CD4-positive, alpha-beta T cell (primary cell): ENCODE measurements at regions of chr11 and their contacts with region 1.

Region 1: GRCh38 chr11:67317205-67317887 is 14.0 kb downstream of the SSH3 start:
- DNase-seq: peak; percentile 96 to 99 (median 98)
- ATAC-seq: peak; percentile 78
- H3K4me3 ChIP-seq: peak overlapping the region; percentile 82
- H3K4me3 Mint-ChIP-seq: peak overlapping the region; percentile 99
- H3K27ac ChIP-seq: peak overlapping the region; percentile 46 to 70
- H3K27ac Mint-ChIP-seq: peak overlapping the region; percentile 85
- H3K4me1 ChIP-seq: peaks cover 42% of the 10 kb centered on the region
- H3K4me1 Mint-ChIP-seq: peaks cover 54% of the 10 kb centered on the region
- H3K27me3 ChIP-seq: no peaks in the 10 kb centered on the region
- H3K27me3 Mint-ChIP-seq: no peaks in the 10 kb centered on the region
- CTCF ChIP-seq: peak; percentile 88

Region 2: DNA sequence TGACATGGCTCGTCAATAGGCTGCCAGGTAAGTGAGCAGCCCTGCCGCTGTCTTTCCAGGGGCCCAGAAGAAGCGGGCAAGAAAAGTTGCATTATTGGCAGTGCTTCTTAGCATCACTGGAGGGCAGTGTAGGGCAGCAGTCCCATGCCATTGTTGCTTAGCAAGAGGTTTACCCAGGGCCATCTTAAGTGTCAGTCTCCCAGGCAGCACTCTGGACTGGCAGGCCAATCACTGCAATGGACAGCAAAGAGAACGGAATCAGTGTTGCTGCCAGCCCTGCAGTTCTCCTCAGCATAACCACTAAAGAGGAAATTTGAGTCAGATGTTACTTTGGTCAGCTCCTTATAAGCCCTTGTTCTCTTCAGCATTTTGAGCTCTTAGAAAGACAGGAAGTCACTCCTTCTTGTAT is 64.5 kb before region 1 on chr11:
- CTCF ChIA-PET with region 1: interaction called, 22 read pairs
- POLR2A ChIA-PET with region 1: interaction called, 7 read pairs
- intact Hi-C with region 1: no loop called
- DNase-seq: peak in 5 of 14 experiments; percentile 26 to 74 (median 53)
- ATAC-seq: peak; percentile 67
- H3K4me3 ChIP-seq: no peak overlapping the region
- H3K4me3 Mint-ChIP-seq: no peak overlapping the region
- H3K27ac ChIP-seq: no peak overlapping the region
- H3K27ac Mint-ChIP-seq: peak overlapping the region; percentile 57
- H3K4me1 ChIP-seq: peaks cover 27% of the 10 kb centered on the region
- H3K4me1 Mint-ChIP-seq: peaks cover 54% of the 10 kb centered on the region
- H3K27me3 ChIP-seq: no peaks in the 10 kb centered on the region
- H3K27me3 Mint-ChIP-seq: no peaks in the 10 kb centered on the region
- CTCF ChIP-seq: peak; percentile 34

Region 3: GRCh38 chr11:67277231-67277961 is 40.0 kb before region 1 on chr11:
- CTCF ChIA-PET with region 1: interaction called, 64 read pairs
- POLR2A ChIA-PET with region 1: interaction called, 31 read pairs
- intact Hi-C with region 1: loop called in 1 of 2 experiments (anchors 1 kb)
- DNase-seq: peak; percentile 81 to 98 (median 93)
- ATAC-seq: peak; percentile 93
- H3K4me3 ChIP-seq: peak overlapping the region; percentile 43
- H3K4me3 Mint-ChIP-seq: peak overlapping the region; percentile 91
- H3K27ac ChIP-seq: peak overlapping the region; percentile 76 to 97
- H3K27ac Mint-ChIP-seq: peak overlapping the region; percentile 90
- H3K4me1 ChIP-seq: peaks cover 100% of the 10 kb centered on the region
- H3K4me1 Mint-ChIP-seq: peaks cover 64% of the 10 kb centered on the region
- H3K27me3 ChIP-seq: no peaks in the 10 kb centered on the region
- H3K27me3 Mint-ChIP-seq: no peaks in the 10 kb centered on the region
- CTCF ChIP-seq: no peak

Region 4: GRCh38 chr11:67303132-67303834 is 14.1 kb before region 1 on chr11 and contains the start of gene SSH3:
- CTCF ChIA-PET with region 1: interaction called, 21 read pairs
- POLR2A ChIA-PET with region 1: interaction called, 13 read pairs
- intact Hi-C with region 1: no loop called
- DNase-seq: peak in 8 of 14 experiments; percentile 30 to 66 (median 48)
- ATAC-seq: peak; percentile 62
- H3K4me3 ChIP-seq: peak within 1 kb of the TSS; percentile 62
- H3K4me3 Mint-ChIP-seq: peak within 1 kb of the TSS; percentile 65
- H3K27ac ChIP-seq: peak within 1 kb of the TSS in 1 of 2 donors; percentile 41
- H3K27ac Mint-ChIP-seq: no peak within 1 kb of the TSS
- H3K4me1 ChIP-seq: peaks cover 33% of the 10 kb centered on the region
- H3K4me1 Mint-ChIP-seq: peaks cover 5% of the 10 kb centered on the region
- H3K27me3 ChIP-seq: no peaks in the 10 kb centered on the region
- H3K27me3 Mint-ChIP-seq: no peaks in the 10 kb centered on the region
- CTCF ChIP-seq: no peak
- total RNA-seq, gene SSH3: 8.5 to 8.8 TPM

Region 5: GRCh38 chr11:67371212-67371910 is 54.0 kb after region 1 on chr11:
- CTCF ChIA-PET with region 1: no interaction called
- POLR2A ChIA-PET with region 1: no interaction called
- intact Hi-C with region 1: no loop called
- DNase-seq: peak in 4 of 14 experiments; percentile 19 to 73 (median 52)
- ATAC-seq: peak; percentile 12
- H3K4me3 ChIP-seq: peak overlapping the region; percentile 46
- H3K4me3 Mint-ChIP-seq: peak overlapping the region; percentile 94
- H3K27ac ChIP-seq: no peak overlapping the region
- H3K27ac Mint-ChIP-seq: peak overlapping the region; percentile 85
- H3K4me1 ChIP-seq: peaks cover 84% of the 10 kb centered on the region
- H3K4me1 Mint-ChIP-seq: peaks cover 62% of the 10 kb centered on the region
- H3K27me3 ChIP-seq: peaks cover 2 to 13% of the 10 kb centered on the region in 2 experiments
- H3K27me3 Mint-ChIP-seq: peaks cover 33% of the 10 kb centered on the region
- CTCF ChIP-seq: no peak

Region 6: DNA sequence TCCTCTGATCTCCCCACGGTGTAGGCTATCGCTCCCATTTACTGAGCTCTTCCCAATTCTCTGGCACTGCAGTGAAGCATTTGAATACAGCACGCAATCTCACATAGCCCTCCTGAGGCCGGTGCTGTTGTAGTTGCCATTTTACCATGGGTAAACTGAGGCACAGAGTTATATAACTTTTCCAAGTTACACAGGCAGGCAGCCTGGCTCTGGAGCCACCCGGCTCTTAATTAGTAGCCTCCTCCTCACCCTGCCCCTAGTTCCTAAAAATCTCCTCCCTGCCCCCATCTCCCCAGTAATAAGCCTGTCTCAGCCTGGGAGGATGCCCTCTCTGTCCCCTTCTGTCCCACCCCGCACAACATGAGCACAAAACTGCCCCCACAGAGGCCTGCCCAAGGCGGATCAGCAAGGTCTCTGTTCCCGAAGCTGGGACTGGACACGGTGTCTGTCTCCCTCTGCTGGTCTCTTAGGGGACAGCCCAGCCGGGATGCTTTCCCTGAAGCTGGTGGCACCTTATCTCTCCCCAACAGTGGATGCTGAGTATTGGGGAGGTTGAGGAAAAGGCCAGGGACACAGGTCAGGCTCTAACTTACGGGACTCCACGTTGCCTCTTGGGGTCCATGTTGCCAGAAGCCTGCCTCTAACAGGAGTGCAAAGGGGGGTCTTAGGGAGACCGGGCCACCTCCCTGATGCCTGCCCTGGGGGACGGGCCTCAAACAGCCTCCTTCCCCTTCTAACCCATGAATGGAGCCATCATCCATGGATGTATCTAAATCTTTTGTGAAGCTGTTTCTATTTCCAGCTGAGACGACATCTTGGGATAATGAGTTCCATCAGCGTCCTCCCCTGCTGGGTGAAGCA is 65.2 kb after region 1 on chr11:
- CTCF ChIA-PET with region 1: interaction called, 15 read pairs
- POLR2A ChIA-PET with region 1: interaction called, 3 read pairs
- intact Hi-C with region 1: no loop called
- DNase-seq: peak; percentile 72 to 90 (median 82)
- ATAC-seq: peak; percentile 99
- H3K4me3 ChIP-seq: no peak overlapping the region
- H3K4me3 Mint-ChIP-seq: no peak overlapping the region
- H3K27ac ChIP-seq: no peak overlapping the region
- H3K27ac Mint-ChIP-seq: no peak overlapping the region
- H3K4me1 ChIP-seq: peaks cover 15% of the 10 kb centered on the region
- H3K4me1 Mint-ChIP-seq: peaks cover 5% of the 10 kb centered on the region
- H3K27me3 ChIP-seq: no peaks in the 10 kb centered on the region
- H3K27me3 Mint-ChIP-seq: peaks cover 4% of the 10 kb centered on the region
- CTCF ChIP-seq: peak; percentile 92